Activated CD4-positive, alpha-beta T cell treated with anti-CD3 and anti-CD28 coated beads for 36 hours (primary cell): ENCODE measurements at regions of chr6 and their contacts with region 1.

Region 1: GRCh38 chr6:35202066-35202546 is 11.7 kb upstream of the SCUBE3 start:
- DNase-seq: no peak
- ATAC-seq: no peak
- H3K4me3 Mint-ChIP-seq: no peak overlapping the region
- H3K27ac Mint-ChIP-seq: no peak overlapping the region
- H3K4me1 Mint-ChIP-seq: no peaks in the 10 kb centered on the region
- H3K27me3 Mint-ChIP-seq: peaks cover 26% of the 10 kb centered on the region

Region 2: DNA sequence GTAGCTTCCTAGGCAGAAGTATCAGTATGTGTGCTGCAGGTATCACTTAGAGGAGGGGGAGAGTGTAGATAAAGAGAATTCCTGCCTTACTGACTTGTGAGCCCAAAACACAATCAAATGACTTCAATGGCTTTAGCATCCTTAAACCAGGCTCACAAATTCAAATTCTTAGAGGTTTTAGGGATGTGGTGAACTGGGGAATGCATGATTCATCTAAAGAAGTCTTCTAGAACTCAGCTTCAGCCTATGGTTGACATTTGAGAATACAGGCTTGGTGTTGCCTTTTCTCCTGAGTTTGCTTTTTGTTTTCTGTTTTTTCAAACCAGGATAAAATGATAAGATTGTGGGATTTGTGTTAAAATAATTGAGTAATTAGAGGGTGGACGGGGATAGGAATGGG is 430.4 kb before region 1 on chr6:
- CTCF ChIA-PET with region 1: no interaction called
- POLR2A ChIA-PET with region 1: no interaction called
- intact Hi-C with region 1: no loop called
- DNase-seq: no peak
- ATAC-seq: no peak
- H3K4me3 Mint-ChIP-seq: no peak overlapping the region
- H3K27ac Mint-ChIP-seq: no peak overlapping the region
- H3K4me1 Mint-ChIP-seq: peaks cover 13% of the 10 kb centered on the region
- H3K27me3 Mint-ChIP-seq: no peaks in the 10 kb centered on the region

Region 3: DNA sequence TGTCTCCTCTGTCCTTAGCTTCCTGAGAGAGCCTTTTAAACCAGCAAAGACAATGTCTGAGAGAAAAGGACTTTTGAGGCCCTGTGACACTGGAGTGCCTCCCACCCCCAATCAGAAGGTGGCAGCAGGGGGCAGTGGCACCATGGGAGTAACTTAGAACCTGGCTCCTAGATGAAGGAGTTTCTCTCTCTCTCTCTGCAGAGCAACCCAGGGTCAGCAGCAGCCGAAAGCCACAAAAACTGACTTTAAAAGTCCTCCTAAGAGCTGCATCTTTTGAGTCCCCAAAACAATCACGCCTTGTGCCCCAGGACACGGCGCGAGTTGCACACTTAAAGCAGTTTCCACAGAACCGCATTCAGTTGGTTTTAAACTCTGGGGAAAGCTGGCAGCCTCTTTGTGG is 55.7 kb before region 1 on chr6:
- CTCF ChIA-PET with region 1: interaction called, 40 read pairs
- POLR2A ChIA-PET with region 1: no interaction called
- intact Hi-C with region 1: loop called (anchors 1 kb)
- DNase-seq: peak; percentile 70
- ATAC-seq: no peak
- H3K4me3 Mint-ChIP-seq: no peak overlapping the region
- H3K27ac Mint-ChIP-seq: no peak overlapping the region
- H3K4me1 Mint-ChIP-seq: peaks cover 24% of the 10 kb centered on the region
- H3K27me3 Mint-ChIP-seq: peaks cover 14% of the 10 kb centered on the region

Region 4: GRCh38 chr6:35213824-35214756 is 12.0 kb after region 1 on chr6 and contains the start of gene SCUBE3:
- CTCF ChIA-PET with region 1: interaction called, 11 read pairs
- POLR2A ChIA-PET with region 1: no interaction called
- intact Hi-C with region 1: no loop called
- DNase-seq: peak; percentile 39
- ATAC-seq: peak; percentile 65
- H3K4me3 Mint-ChIP-seq: peak within 1 kb of the TSS; percentile 46
- H3K27ac Mint-ChIP-seq: no peak within 1 kb of the TSS
- H3K4me1 Mint-ChIP-seq: peaks cover 6% of the 10 kb centered on the region
- H3K27me3 Mint-ChIP-seq: peaks cover 55% of the 10 kb centered on the region
- total RNA-seq, gene SCUBE3: not detected

Region 5: GRCh38 chr6:35219683-35220326 is 17.7 kb after region 1 on chr6:
- CTCF ChIA-PET with region 1: interaction called, 11 read pairs
- POLR2A ChIA-PET with region 1: interaction called, 3 read pairs
- intact Hi-C with region 1: no loop called
- DNase-seq: no peak
- ATAC-seq: no peak
- H3K4me3 Mint-ChIP-seq: no peak overlapping the region
- H3K27ac Mint-ChIP-seq: no peak overlapping the region
- H3K4me1 Mint-ChIP-seq: no peaks in the 10 kb centered on the region
- H3K27me3 Mint-ChIP-seq: peaks cover 35% of the 10 kb centered on the region

Region 6: DNA sequence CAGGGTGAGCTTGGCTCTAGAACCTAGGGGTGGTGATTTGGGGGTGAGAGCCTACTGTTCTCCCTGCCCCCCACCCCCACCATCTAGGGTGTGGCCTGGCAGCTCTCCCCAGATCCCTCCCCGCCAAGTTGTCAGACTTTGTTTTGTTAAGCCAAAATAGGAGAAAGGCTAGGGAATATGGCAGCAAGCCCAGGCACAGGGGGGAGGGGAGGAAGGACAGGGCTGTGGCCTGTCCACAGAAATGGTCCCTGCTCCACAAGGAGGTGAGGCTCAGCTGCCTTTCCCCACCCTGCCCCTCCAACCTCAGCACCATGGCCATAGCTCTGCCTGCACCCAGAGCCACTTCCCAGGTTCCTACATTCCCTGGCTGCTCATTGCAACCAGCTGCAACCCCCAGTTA is 28.8 kb after region 1 on chr6:
- CTCF ChIA-PET with region 1: interaction called, 20 read pairs
- POLR2A ChIA-PET with region 1: no interaction called
- intact Hi-C with region 1: no loop called
- DNase-seq: no peak
- ATAC-seq: no peak
- H3K4me3 Mint-ChIP-seq: no peak overlapping the region
- H3K27ac Mint-ChIP-seq: no peak overlapping the region
- H3K4me1 Mint-ChIP-seq: no peaks in the 10 kb centered on the region
- H3K27me3 Mint-ChIP-seq: no peaks in the 10 kb centered on the region

Region 7: GRCh38 chr6:35240840-35241801 is 39.0 kb after region 1 on chr6:
- CTCF ChIA-PET with region 1: interaction called, 46 read pairs
- POLR2A ChIA-PET with region 1: no interaction called
- intact Hi-C with region 1: loop called in 1 of 2 experiments (anchors 2 kb)
- DNase-seq: peak; percentile 86
- ATAC-seq: peak; percentile 96
- H3K4me3 Mint-ChIP-seq: no peak overlapping the region
- H3K27ac Mint-ChIP-seq: no peak overlapping the region
- H3K4me1 Mint-ChIP-seq: no peaks in the 10 kb centered on the region
- H3K27me3 Mint-ChIP-seq: no peaks in the 10 kb centered on the region

Region 8: GRCh38 chr6:35370124-35370741 is 168.1 kb after region 1 on chr6:
- CTCF ChIA-PET with region 1: no interaction called
- POLR2A ChIA-PET with region 1: no interaction called
- intact Hi-C with region 1: no loop called
- DNase-seq: peak; percentile 59
- ATAC-seq: peak; percentile 62
- H3K4me3 Mint-ChIP-seq: peak overlapping the region; percentile 41
- H3K27ac Mint-ChIP-seq: peak overlapping the region; percentile 96
- H3K4me1 Mint-ChIP-seq: peaks cover 63% of the 10 kb centered on the region
- H3K27me3 Mint-ChIP-seq: no peaks in the 10 kb centered on the region

Region 9: GRCh38 chr6:35468181-35468979 is 266.3 kb after region 1 on chr6 and contains the start of gene RPL10A:
- CTCF ChIA-PET with region 1: no interaction called
- POLR2A ChIA-PET with region 1: no interaction called
- intact Hi-C with region 1: no loop called
- DNase-seq: peak; percentile 97
- ATAC-seq: peak; percentile 87
- H3K4me3 Mint-ChIP-seq: peak within 1 kb of the TSS; percentile 93
- H3K27ac Mint-ChIP-seq: peak within 1 kb of the TSS; percentile 98
- H3K4me1 Mint-ChIP-seq: peaks cover 43% of the 10 kb centered on the region
- H3K27me3 Mint-ChIP-seq: no peaks in the 10 kb centered on the region
- total RNA-seq, gene RPL10A: 1,952 to 2,334 TPM